Dorsolateral prefrontal cortex (tissue), 120 donors: ENCODE measurements at regions of chr15 and their contacts with region 1.

Region 1: DNA sequence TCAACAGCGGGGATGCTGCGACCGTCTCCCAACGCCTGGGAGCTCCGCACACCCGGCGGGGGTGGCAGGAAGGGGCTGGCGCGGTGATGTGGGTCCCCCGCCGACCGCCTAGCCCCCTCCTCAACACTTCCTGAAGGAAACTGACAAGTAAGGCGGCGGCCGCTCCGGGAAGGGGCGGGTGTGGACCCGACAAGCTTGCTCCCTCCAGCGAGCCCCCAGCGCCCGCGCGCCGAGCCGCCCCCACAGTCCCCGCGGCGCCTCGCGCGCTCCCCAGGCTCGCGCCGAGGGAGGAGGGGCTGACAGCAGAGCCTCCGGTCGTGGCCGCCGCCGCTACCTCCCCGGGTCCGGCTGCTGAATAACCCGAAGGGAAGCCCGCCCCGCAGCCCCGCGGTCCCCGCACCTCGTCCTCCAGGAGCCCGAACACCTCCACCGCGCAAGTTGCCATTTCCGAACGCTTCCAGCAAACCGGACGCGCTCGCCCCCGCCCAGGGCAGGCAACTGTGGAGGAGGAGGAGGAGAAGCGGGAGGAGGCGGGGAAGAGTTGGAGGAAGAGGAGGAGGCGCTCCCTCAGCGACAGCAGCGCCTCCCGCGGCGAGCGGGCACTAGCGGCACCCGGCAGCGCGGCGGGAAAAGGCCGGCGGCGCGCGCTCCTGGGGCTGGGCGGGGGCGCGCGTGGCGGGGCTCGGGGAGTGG is at the start of gene NEDD4:
- DNase-seq: peak; percentile 49 to 89 (median 71)
- H3K4me3 ChIP-seq: peak within 1 kb of the TSS; percentile 67 to 98 (median 86)
- H3K27ac ChIP-seq: peak within 1 kb of the TSS; percentile 63 to 94 (median 87)
- H3K27me3 ChIP-seq: no peaks in the 10 kb centered on the region
- CTCF ChIP-seq: peak in 51 of 56 donors; percentile 5 to 79 (median 46)
- total RNA-seq, gene NEDD4: 2.3 to 13.2 (median 6.5) TPM

Region 2: GRCh38 chr15:55407949-55408791 is 585.1 kb before region 1 on chr15 and contains the starts of genes CCPG1 and PIERCE2:
- intact Hi-C with region 1: loop called in 1 of 2 experiments (anchors 10 kb)
- DNase-seq: peak; percentile 72 to 94 (median 90)
- H3K4me3 ChIP-seq: peak within 1 kb of the TSS; percentile 64 to 99 (median 87)
- H3K27ac ChIP-seq: peak within 1 kb of the TSS; percentile 1 to 97 (median 91)
- H3K27me3 ChIP-seq: no peaks in the 10 kb centered on the region
- CTCF ChIP-seq: peak; percentile 60 to 95 (median 80)
- total RNA-seq, gene CCPG1: 69.0 to 139 (median 106) TPM
- total RNA-seq, gene PIERCE2: 0.82 to 9.2 (median 3.5) TPM in 118 of 120 experiments, not detected in the others

Region 3: GRCh38 chr15:56052395-56053045 is 59.3 kb after region 1 on chr15:
- intact Hi-C with region 1: loop called in 1 of 2 experiments (anchors 5 kb)
- DNase-seq: no peak
- H3K4me3 ChIP-seq: no peak overlapping the region
- H3K27ac ChIP-seq: no peak overlapping the region
- H3K27me3 ChIP-seq: no peaks in the 10 kb centered on the region
- CTCF ChIP-seq: peak; percentile 54 to 94 (median 78)

Region 4: DNA sequence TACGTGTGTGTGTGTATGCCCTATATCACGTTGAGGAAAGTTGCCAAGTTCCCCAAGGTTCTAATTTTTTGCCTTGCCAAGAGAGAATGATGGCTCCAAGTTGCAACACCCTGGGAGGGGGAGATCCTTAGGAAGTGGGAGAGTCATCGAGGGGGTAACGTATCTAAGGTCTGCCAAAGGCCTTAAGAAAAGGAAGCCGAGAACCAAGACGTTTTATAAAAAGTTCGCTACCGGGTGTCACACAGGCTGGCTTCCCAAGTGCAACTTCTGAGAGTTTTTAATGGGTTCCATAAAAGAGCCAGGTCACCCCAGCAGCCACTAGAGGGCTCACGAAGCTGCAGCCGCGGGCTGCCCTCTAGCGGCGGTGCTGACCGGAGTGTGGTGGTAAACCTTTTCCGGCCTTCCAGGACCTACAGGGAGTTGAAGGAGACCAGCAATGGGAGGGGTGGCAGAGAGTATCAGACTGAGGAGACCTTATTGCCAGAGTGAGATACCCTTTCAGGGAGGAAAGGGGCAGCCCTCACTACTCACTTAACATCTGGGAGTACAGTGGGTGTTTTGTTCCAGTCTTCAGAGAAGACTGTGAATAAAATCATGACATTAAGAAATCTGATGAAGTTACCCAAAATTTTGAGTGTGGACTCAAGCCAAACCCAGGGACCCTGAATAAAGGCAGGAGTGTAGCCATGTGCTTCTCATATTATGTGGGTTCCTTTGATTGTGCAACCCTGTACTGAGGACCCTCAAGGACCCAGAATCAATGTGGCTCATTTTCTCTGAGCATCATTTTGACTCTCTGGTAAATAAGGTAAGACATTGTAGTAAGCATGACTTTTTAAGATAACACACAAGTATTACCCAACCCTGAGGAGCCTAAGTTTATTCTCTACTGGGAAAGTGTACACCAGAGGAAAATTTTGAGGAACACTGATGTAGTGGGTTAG is 252.9 kb after region 1 on chr15:
- intact Hi-C with region 1: loop called (anchors 5 kb)
- DNase-seq: peak; percentile 55 to 86 (median 82)
- H3K4me3 ChIP-seq: peak overlapping the region in 56 of 59 donors; percentile 8 to 78 (median 44)
- H3K27ac ChIP-seq: peak overlapping the region in 34 of 59 donors; percentile 12 to 96 (median 87)
- H3K27me3 ChIP-seq: no peaks in the 10 kb centered on the region
- CTCF ChIP-seq: peak; percentile 75 to 100 (median 98)

Region 5: DNA sequence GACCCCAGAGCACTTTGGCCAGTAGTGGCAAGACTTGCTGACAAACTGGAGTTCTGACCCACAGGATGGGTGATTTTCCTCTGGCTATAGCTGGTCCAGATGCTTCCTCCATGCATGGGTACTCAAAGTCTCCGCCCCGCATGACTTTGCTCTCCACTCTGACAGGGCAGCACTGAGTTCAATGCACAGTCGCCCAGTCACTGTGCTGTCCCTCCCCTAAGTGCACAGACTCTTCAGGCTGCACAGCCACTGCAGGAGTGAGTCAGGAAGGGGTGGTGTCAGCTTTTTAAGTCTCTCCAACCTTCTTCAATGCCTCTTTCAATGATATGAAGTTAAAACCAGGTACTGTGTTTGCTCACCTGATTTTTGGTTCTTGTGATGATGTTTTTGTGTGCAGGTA is 389.8 kb after region 1 on chr15:
- intact Hi-C with region 1: no loop called
- DNase-seq: no peak
- H3K4me3 ChIP-seq: no peak overlapping the region
- H3K27ac ChIP-seq: no peak overlapping the region
- H3K27me3 ChIP-seq: no peaks in the 10 kb centered on the region
- CTCF ChIP-seq: no peak